Panc1 (cell line): ENCODE measurements at regions of chr20 and their contacts with region 1.

Region 1: GRCh38 chr20:31738729-31739561 is at the start of gene TPX2:
- DNase-seq: peak; percentile 100
- ATAC-seq: peak; percentile 99
- H3K4me3 ChIP-seq: peak within 1 kb of the TSS; percentile 71 to 79
- H3K27ac ChIP-seq: peak within 1 kb of the TSS; percentile 99
- H3K4me1 ChIP-seq: peaks cover 24% of the 10 kb centered on the region
- H3K27me3 ChIP-seq: no peaks in the 10 kb centered on the region
- CTCF ChIP-seq: no peak
- total RNA-seq, gene TPX2: 248 TPM

Region 2: GRCh38 chr20:32077190-32077589 is 338.2 kb after region 1 on chr20:
- CTCF ChIA-PET with region 1: no interaction called
- POLR2A ChIA-PET with region 1: no interaction called
- in situ Hi-C with region 1: loop called (anchors 10 kb)
- intact Hi-C with region 1: no loop called
- DNase-seq: no peak
- ATAC-seq: no peak
- H3K4me3 ChIP-seq: no peak overlapping the region
- H3K27ac ChIP-seq: no peak overlapping the region
- H3K4me1 ChIP-seq: no peaks in the 10 kb centered on the region
- H3K27me3 ChIP-seq: peaks cover 3% of the 10 kb centered on the region; the same call in 1 of the 2 replicates
- CTCF ChIP-seq: no peak